ENCODE measurements at regions of chr11 and their contacts with region 1.

Region 1: DNA sequence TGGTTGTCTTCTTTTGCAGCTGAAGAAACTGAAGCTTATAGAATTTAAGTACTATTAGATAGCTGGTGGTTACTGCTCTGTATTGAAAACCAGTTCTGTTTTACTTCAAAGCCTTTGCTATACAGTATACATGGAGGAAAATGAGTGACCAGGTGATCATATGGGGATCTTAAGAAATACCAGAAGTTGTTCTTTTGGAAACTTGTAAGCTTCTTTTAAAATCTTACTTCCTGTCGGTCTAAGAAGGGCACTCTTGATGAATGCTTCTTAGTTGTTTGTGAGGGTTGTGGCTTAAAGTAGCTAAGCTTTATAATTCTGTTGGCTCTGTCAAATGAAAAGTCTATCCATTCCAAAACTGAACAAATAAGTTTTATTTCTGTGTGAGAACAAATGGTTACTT is 55.2 kb downstream of the PDE3B start:
- DNase-seq: no peak
- H3K4me3 Mint-ChIP-seq: no peak overlapping the region
- H3K27ac Mint-ChIP-seq: no peak overlapping the region
- H3K4me1 Mint-ChIP-seq: peaks cover 38% of the 10 kb centered on the region
- H3K27me3 Mint-ChIP-seq: no peaks in the 10 kb centered on the region

Region 2: GRCh38 chr11:14727215-14727614 is 28.4 kb after region 1 on chr11:
- intact Hi-C with region 1: no loop called
- DNase-seq: no peak
- H3K4me3 Mint-ChIP-seq: no peak overlapping the region
- H3K27ac Mint-ChIP-seq: no peak overlapping the region
- H3K4me1 Mint-ChIP-seq: peaks cover 59% of the 10 kb centered on the region
- H3K27me3 Mint-ChIP-seq: no peaks in the 10 kb centered on the region

Region 3: GRCh38 chr11:14742849-14743559 is 44.2 kb after region 1 on chr11:
- intact Hi-C with region 1: loop called (anchors 5 kb)
- DNase-seq: no peak
- H3K4me3 Mint-ChIP-seq: peak overlapping the region; percentile 17
- H3K27ac Mint-ChIP-seq: no peak overlapping the region
- H3K4me1 Mint-ChIP-seq: peaks cover 70% of the 10 kb centered on the region
- H3K27me3 Mint-ChIP-seq: no peaks in the 10 kb centered on the region

Measured in activated T-helper 1 cell treated with anti-CD3 and anti-CD28 coated beads, Interleukin-12 subunit alpha, Interleukin-12 subunit beta, Interleukin-2, Interleukin-4 antibody, amounts not matched to agents 30 ng/mL and 10 ng/mL and 1 ng/mL, durations not matched to agents 14 hours and 24 hours and 36 hours (primary cell).